Cardiac septum (tissue), 1 donor: ENCODE measurements at regions of chr9 and their contacts with region 1.

Region 1: GRCh38 chr9:71716138-71716909 is 52.0 kb downstream of the CEMIP2 start:
- DNase-seq: no peak

Region 2: DNA sequence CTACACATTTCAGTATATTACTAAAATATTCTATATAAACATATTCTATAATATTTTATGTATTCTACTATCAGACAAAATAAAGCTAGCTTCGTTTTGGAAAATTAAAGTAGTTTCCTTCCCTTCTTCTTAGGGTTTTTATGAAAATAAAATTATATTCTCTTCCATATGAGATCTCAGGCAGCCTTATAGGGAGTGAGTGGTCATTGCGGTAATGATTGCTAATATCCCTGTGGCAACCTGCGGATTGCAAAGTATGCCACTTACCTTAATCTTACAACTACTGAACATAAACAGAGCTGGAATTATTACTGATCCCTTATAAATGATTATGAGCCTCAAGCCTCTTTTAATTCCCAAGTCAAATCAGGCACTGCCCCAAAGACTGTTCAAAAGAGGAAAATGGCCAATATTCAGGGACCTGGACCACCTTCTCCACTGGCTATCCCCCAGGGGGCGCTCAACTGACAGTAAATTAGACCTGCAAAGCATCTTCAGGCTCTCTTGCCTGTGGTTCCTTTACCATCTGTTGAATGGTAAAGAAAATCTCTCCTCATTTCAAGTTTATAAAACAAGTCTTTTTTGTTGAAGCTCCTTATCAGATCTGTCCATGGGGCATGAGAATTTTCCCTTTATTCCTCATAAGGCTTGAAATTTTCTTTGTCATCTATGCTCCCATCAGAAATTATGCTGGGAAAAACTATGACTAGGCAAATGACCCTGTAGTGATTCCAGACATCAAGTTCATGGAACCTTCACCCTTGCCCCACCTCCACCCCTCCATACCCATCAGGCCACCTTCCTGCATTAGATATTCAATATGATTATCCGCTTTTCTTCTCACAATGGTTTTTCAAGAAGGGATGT is 111.9 kb before region 1 on chr9:
- intact Hi-C with region 1: loop called (anchors 10 kb)
- DNase-seq: peak; percentile 87